ENCODE measurements at regions of chr3 and their contacts with region 1.

Region 1: DNA sequence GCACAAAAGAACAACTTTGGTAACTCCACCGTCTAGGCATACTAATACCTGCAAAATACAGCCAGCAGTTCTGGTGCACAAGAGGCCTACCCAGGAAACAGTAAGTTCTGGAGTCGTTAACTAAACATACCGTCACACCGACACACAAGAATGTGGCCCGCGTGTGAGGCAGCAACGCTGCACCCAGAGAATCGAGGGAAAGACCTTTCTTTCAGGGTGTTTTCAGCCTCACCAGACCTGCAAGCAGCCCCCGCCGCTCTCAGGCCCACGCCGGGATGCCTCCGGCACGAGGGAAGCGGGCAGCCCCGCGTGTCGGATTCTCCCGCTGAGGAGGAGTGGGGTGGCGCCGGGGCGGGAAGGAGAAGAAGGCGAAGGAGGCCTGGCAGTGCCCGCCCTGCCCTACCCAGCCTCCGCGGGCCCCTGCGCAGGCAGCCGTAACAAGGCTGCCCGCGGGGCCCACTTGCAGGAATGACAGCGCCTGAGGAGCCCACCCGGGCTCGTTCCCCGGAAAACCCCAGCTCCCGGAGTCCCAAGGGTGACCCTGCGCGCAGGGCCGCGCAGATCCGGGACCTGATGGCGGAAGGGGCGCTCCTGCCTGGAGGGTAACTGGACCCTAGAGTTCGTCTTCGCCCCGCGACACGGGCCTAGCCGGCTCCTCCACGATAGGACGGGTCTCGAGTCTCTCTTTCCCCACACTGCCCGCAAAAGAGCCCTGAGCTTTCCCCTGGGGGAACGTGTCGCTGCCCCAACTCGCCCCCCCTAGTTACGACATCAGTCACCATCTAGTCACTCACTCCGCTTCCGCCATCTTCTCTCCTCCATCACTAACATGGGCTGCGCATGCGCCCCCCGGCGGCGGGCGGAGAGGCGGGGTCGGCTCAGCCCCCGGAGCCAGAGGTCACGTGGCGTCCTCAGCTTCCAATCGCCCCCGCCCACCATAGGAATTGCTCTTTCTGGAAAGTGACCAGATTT is at the start of gene PHC3:
- DNase-seq: peak; percentile 88
- H3K4me3 Mint-ChIP-seq: peak within 1 kb of the TSS; percentile 98
- H3K27ac Mint-ChIP-seq: peak within 1 kb of the TSS; percentile 100
- H3K4me1 Mint-ChIP-seq: peaks cover 33% of the 10 kb centered on the region
- H3K27me3 Mint-ChIP-seq: no peaks in the 10 kb centered on the region
- total RNA-seq, gene PHC3: 57.7 and 58.7 TPM in 2 replicates

Region 2: DNA sequence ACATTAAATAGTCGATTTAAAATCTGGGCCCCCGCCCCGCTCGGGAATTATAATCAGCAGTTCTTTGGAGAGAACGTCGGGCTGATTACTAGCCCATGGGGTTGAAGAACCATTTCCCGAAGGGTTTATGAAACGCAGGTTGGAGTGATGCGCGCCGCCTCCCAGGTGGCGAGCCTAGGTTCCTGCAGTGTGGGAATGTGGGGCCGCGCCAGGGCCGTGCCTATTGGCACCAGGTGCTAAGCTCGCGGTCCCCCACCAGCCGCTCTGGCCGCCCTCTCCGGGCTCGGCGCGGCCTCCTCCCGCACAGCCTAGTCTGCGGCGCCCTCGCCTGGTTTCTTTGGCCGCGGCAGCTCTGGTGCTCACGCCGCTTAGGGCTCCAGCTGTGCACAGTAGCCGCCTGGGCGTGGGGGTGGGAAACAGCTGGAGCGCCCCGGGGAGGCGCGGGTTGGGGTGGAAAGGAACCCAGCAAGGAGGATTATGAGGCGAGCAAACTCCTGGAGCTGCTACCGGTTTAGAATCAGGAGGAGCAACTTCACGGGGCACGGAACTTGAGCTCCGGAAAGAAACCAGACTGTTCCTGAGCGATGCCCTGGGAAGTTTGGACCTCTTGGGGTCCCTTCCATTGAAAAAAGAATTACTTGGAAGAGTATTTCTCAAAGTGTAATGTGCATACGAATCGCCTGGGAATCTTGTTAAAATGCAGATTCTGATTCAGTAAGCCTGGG is 512.1 kb before region 1 on chr3:
- intact Hi-C with region 1: no loop called
- DNase-seq: no peak
- H3K4me3 Mint-ChIP-seq: peak overlapping the region; percentile 25
- H3K27ac Mint-ChIP-seq: no peak overlapping the region
- H3K4me1 Mint-ChIP-seq: peaks cover 27% of the 10 kb centered on the region
- H3K27me3 Mint-ChIP-seq: peaks cover 87% of the 10 kb centered on the region

Region 3: GRCh38 chr3:169764452-169765274 is 416.5 kb before region 1 on chr3 and contains the start of gene TERC:
- intact Hi-C with region 1: loop called (anchors 2 kb)
- DNase-seq: peak; percentile 85
- H3K4me3 Mint-ChIP-seq: peak within 1 kb of the TSS; percentile 96
- H3K27ac Mint-ChIP-seq: peak within 1 kb of the TSS; percentile 98
- H3K4me1 Mint-ChIP-seq: peaks cover 24% of the 10 kb centered on the region
- H3K27me3 Mint-ChIP-seq: peaks cover 5% of the 10 kb centered on the region
- total RNA-seq, gene TERC: 3.1 and 3.4 TPM in 2 replicates

Region 4: DNA sequence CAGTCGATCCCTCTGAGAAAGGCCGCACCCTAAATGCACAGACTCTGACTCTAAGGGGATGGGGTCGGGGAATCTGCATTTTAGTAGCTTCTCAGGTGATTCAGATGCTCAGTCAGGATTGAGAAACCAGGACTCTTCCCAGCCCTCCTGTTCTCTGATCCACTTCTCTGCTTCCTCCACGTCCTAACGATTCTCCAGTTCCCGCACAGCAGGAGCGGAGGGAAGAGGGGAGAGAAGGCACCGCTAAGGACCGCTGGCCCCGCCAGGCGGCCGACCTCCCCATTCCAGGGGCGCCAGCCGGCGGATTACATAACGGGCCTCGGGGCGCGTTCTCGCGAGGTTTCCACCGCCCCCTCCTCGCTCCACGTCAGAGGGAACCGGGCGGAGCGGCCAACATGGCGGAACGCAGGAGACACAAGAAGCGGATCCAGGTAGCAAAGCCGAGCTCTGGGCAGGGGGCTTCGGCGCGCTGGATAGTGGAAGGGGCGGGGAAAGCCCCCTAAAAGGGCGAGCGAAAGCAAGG is 214.7 kb before region 1 on chr3 and contains the start of gene SEC62:
- intact Hi-C with region 1: loop called (anchors 2 kb)
- DNase-seq: peak; percentile 90
- H3K4me3 Mint-ChIP-seq: peak within 1 kb of the TSS; percentile 91
- H3K27ac Mint-ChIP-seq: peak within 1 kb of the TSS; percentile 99
- H3K4me1 Mint-ChIP-seq: peaks cover 42% of the 10 kb centered on the region
- H3K27me3 Mint-ChIP-seq: peaks cover 2% of the 10 kb centered on the region
- total RNA-seq, gene SEC62: 75.4 and 85.7 TPM in 2 replicates

Region 5: DNA sequence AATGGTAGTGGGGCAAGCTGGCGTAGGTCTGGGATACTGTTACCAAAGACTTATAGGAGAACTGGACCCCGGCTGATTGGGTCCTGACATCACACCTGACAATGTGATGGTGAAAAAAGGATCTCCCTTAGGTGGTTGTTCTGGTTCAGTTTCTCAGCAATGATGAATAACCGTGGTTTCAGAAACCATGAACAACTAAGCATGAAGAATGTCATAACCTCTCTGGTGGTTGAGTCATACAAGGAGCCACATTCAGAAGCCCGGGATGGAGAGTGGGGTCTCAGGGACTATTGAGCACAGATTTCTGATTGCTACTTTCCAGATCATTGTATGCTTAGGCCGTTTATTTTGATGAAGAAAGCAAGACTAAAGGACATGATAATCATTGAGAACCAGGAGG is 126.0 kb before region 1 on chr3:
- intact Hi-C with region 1: loop called (anchors 5 kb)
- DNase-seq: no peak
- H3K4me3 Mint-ChIP-seq: no peak overlapping the region
- H3K27ac Mint-ChIP-seq: no peak overlapping the region
- H3K4me1 Mint-ChIP-seq: peaks cover 43% of the 10 kb centered on the region
- H3K27me3 Mint-ChIP-seq: no peaks in the 10 kb centered on the region

Region 6: GRCh38 chr3:170221924-170222646 is 40.9 kb after region 1 on chr3 and contains the start of gene PRKCI:
- intact Hi-C with region 1: loop called (anchors 1 kb)
- DNase-seq: peak; percentile 85
- H3K4me3 Mint-ChIP-seq: peak within 1 kb of the TSS; percentile 94
- H3K27ac Mint-ChIP-seq: peak within 1 kb of the TSS; percentile 87
- H3K4me1 Mint-ChIP-seq: peaks cover 25% of the 10 kb centered on the region
- H3K27me3 Mint-ChIP-seq: no peaks in the 10 kb centered on the region
- total RNA-seq, gene PRKCI: 23.0 and 24.2 TPM in 2 replicates

Region 7: DNA sequence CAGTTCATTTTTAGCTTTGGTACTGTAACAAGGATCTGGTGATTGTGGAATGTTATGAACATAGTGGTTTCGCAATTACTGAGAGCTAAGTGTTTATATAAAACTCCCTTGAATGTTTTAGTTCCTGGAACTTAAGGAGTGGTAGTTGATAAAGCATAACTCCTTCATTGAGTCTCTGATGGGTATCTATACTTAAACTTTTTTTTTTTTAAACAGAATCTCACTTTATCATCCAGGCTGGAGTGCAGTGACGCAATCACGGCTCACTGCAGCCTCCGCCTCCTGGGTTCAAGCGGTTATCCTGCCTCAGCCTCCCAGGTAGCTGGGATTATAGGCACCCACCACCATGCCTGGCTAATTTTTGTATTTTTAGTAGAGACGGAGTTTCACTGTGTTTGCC is 52.3 kb after region 1 on chr3:
- intact Hi-C with region 1: no loop called
- DNase-seq: no peak
- H3K4me3 Mint-ChIP-seq: no peak overlapping the region
- H3K27ac Mint-ChIP-seq: no peak overlapping the region
- H3K4me1 Mint-ChIP-seq: no peaks in the 10 kb centered on the region
- H3K27me3 Mint-ChIP-seq: no peaks in the 10 kb centered on the region

Region 8: DNA sequence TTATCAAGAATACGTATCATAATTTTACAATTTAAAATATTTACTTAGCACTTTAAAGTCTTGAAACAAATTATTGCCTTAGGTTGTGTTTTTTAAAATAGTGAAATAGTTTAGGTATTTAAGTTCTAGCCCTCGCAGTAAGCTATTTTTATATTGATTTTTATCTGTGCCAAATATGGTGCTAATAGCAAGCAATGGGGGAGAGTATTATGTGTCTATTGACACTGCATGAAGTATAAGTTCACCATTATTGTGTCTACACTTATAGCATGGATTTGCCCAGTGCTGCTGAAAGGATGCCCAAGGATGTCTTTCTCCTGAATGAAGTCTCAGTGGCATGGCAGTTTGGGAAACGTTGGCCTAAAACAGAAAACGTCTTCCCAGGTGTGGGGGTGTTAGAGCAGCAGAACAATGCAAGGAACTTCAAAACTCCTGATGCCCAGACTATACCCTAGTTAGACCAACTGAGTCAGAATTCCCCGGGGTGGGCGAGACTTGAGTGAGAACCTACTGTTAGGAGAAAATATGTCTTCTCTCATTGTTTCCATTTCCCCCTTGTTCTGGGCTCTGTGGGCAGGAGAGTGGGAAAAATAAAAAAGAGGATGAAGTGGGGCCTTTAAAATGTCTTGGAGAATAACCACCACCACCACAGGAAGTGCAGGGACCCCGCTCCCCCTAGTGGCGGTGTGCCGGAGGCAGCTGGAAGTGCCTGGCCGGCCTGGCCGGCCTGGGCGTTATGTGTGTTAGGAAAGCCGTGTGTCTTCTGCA is 508.9 kb after region 1 on chr3:
- intact Hi-C with region 1: loop called (anchors 10 kb)
- DNase-seq: no peak
- H3K4me3 Mint-ChIP-seq: no peak overlapping the region
- H3K27ac Mint-ChIP-seq: no peak overlapping the region
- H3K4me1 Mint-ChIP-seq: no peaks in the 10 kb centered on the region
- H3K27me3 Mint-ChIP-seq: no peaks in the 10 kb centered on the region

Region 9: GRCh38 chr3:170908235-170909116 is 727.3 kb after region 1 on chr3 and contains the start of gene EIF5A2:
- intact Hi-C with region 1: loop called (anchors 2 kb)
- DNase-seq: peak; percentile 88
- H3K4me3 Mint-ChIP-seq: peak within 1 kb of the TSS; percentile 96
- H3K27ac Mint-ChIP-seq: peak within 1 kb of the TSS; percentile 85
- H3K4me1 Mint-ChIP-seq: peaks cover 24% of the 10 kb centered on the region
- H3K27me3 Mint-ChIP-seq: peaks cover 12% of the 10 kb centered on the region
- total RNA-seq, gene EIF5A2: 8.1 and 10.5 TPM in 2 replicates